ENCODE measurements at regions of chr2 and their contacts with region 1.

Region 1: GRCh38 chr2:207625018-207625907 is at the start of gene METTL21A:
- DNase-seq: peak; percentile 96
- ATAC-seq: peak; percentile 79
- H3K4me3 Mint-ChIP-seq: peak within 1 kb of the TSS; percentile 94
- H3K27ac Mint-ChIP-seq: peak within 1 kb of the TSS; percentile 98
- H3K4me1 Mint-ChIP-seq: peaks cover 50% of the 10 kb centered on the region
- H3K27me3 Mint-ChIP-seq: no peaks in the 10 kb centered on the region
- CTCF ChIP-seq: no peak
- total RNA-seq, gene METTL21A: 34.2 and 34.3 TPM in 2 replicates

Region 2: GRCh38 chr2:205706769-205707381 is 1918.4 kb before region 1 on chr2:
- CTCF ChIA-PET with region 1: no interaction called
- POLR2A ChIA-PET with region 1: interaction called, 3 read pairs
- intact Hi-C with region 1: loop called (anchors 10 kb)
- DNase-seq: peak; percentile 60
- ATAC-seq: peak; percentile 95
- H3K4me3 Mint-ChIP-seq: peak overlapping the region; percentile 65
- H3K27ac Mint-ChIP-seq: peak overlapping the region; percentile 99
- H3K4me1 Mint-ChIP-seq: peaks cover 63% of the 10 kb centered on the region
- H3K27me3 Mint-ChIP-seq: no peaks in the 10 kb centered on the region
- CTCF ChIP-seq: no peak

Region 3: DNA sequence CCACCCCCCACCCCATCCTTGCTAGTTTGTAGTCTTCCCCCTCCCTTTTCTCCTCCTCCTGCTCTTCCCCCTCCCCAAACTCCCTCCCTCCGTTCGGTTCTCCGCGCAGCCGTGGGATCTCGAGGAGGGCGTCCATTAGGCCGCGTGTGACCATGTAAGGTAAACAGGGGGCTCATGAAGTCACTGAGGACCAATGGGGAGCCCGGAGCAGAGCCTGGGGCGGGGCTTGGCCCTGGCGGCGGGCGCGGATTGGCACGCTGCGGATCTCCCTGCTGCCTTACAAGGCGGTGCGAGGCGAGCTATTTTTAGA is 459.3 kb before region 1 on chr2:
- CTCF ChIA-PET with region 1: no interaction called
- POLR2A ChIA-PET with region 1: interaction called, 11 read pairs
- intact Hi-C with region 1: loop called (anchors 1 kb)
- DNase-seq: peak; percentile 88
- ATAC-seq: peak; percentile 89
- H3K4me3 Mint-ChIP-seq: peak overlapping the region; percentile 95
- H3K27ac Mint-ChIP-seq: peak overlapping the region; percentile 95
- H3K4me1 Mint-ChIP-seq: peaks cover 63% of the 10 kb centered on the region
- H3K27me3 Mint-ChIP-seq: no peaks in the 10 kb centered on the region
- CTCF ChIP-seq: no peak

Region 4: GRCh38 chr2:207662203-207662602 is 36.9 kb after region 1 on chr2:
- CTCF ChIA-PET with region 1: interaction called, 5 read pairs
- POLR2A ChIA-PET with region 1: interaction called, 18 read pairs
- intact Hi-C with region 1: loop called (anchors 1 kb)
- DNase-seq: peak; percentile 33
- ATAC-seq: peak; percentile 97
- H3K4me3 Mint-ChIP-seq: peak overlapping the region; percentile 78
- H3K27ac Mint-ChIP-seq: peak overlapping the region; percentile 97
- H3K4me1 Mint-ChIP-seq: peaks cover 59% of the 10 kb centered on the region
- H3K27me3 Mint-ChIP-seq: no peaks in the 10 kb centered on the region
- CTCF ChIP-seq: no peak

Region 5: GRCh38 chr2:207734264-207734635 is 109.0 kb after region 1 on chr2:
- CTCF ChIA-PET with region 1: interaction called, 17 read pairs
- POLR2A ChIA-PET with region 1: interaction called, 6 read pairs
- intact Hi-C with region 1: loop called (anchors 1 kb)
- DNase-seq: no peak
- ATAC-seq: peak; percentile 40
- H3K4me3 Mint-ChIP-seq: no peak overlapping the region
- H3K27ac Mint-ChIP-seq: no peak overlapping the region
- H3K4me1 Mint-ChIP-seq: peaks cover 7% of the 10 kb centered on the region
- H3K27me3 Mint-ChIP-seq: no peaks in the 10 kb centered on the region
- CTCF ChIP-seq: no peak

Region 6: DNA sequence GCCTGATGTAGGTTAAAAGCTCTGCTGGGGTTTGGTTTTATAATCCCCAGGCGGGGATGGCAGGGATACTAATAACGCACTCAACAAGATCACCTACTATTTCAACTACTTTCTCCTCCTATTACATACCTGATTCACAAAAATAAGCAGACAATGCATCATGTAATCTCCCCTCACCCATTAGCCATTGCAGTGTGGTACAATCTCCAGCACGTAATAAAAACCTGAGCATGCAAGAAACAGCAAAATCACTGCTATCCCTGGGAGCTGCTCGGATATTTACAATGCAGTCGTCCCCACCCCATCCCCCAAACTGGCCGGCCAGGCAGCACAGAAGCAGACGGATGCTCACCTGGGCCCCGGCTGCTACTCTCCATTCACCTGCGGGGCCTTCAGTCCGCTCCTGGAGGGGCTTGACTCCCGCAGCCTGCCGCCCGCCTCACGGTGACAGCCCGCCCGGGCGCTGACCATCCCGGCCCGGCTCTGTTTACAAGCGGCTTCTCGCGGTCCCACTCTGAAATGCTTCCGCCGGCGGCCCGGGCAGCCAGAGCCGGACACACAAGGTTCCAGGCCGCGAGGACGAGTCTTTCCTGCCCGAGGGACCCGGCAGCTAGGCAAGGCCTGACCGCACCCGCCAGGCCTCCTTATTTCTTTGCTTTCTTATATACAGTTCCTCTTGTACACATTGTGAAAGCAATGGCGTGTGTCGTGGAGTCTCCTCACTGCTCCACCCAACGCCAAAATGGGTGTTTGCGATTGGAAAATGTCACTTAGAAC is 400.0 kb after region 1 on chr2 and contains the start of gene PLEKHM3:
- CTCF ChIA-PET with region 1: interaction called, 3 read pairs
- POLR2A ChIA-PET with region 1: interaction called, 15 read pairs
- intact Hi-C with region 1: loop called (anchors 1 kb)
- DNase-seq: peak; percentile 76
- ATAC-seq: peak; percentile 91
- H3K4me3 Mint-ChIP-seq: peak within 1 kb of the TSS; percentile 86
- H3K27ac Mint-ChIP-seq: peak within 1 kb of the TSS; percentile 92
- H3K4me1 Mint-ChIP-seq: peaks cover 20% of the 10 kb centered on the region
- H3K27me3 Mint-ChIP-seq: no peaks in the 10 kb centered on the region
- CTCF ChIP-seq: no peak
- total RNA-seq, gene PLEKHM3: 12.0 and 12.2 TPM in 2 replicates

Region 7: GRCh38 chr2:208265801-208266552 is 640.7 kb after region 1 on chr2 and contains the start of gene PIKFYVE:
- CTCF ChIA-PET with region 1: interaction called, 6 read pairs
- POLR2A ChIA-PET with region 1: interaction called, 18 read pairs
- intact Hi-C with region 1: loop called (anchors 1 kb)
- DNase-seq: peak; percentile 85
- ATAC-seq: peak; percentile 87
- H3K4me3 Mint-ChIP-seq: peak within 1 kb of the TSS; percentile 95
- H3K27ac Mint-ChIP-seq: peak within 1 kb of the TSS; percentile 95
- H3K4me1 Mint-ChIP-seq: peaks cover 56% of the 10 kb centered on the region
- H3K27me3 Mint-ChIP-seq: no peaks in the 10 kb centered on the region
- CTCF ChIP-seq: no peak
- total RNA-seq, gene PIKFYVE: 92.2 and 106 TPM in 2 replicates

Measured in activated B cell treated with CpG ODN at 0.5 μM for 24 hours (primary cell).